ENCODE measurements at regions of chr4 and their contacts with region 1.

Region 1: GRCh38 chr4:82798168-82799005 is at the start of gene SCD5:
- H3K4me3 ChIP-seq: peak within 1 kb of the TSS; percentile 66
- H3K27ac ChIP-seq: peak within 1 kb of the TSS; percentile 66; the same call in 1 of the 2 replicates
- H3K4me1 ChIP-seq: peaks cover 3% of the 10 kb centered on the region
- CTCF ChIP-seq: peak; percentile 26; the same call in 1 of the 2 replicates

Region 2: DNA sequence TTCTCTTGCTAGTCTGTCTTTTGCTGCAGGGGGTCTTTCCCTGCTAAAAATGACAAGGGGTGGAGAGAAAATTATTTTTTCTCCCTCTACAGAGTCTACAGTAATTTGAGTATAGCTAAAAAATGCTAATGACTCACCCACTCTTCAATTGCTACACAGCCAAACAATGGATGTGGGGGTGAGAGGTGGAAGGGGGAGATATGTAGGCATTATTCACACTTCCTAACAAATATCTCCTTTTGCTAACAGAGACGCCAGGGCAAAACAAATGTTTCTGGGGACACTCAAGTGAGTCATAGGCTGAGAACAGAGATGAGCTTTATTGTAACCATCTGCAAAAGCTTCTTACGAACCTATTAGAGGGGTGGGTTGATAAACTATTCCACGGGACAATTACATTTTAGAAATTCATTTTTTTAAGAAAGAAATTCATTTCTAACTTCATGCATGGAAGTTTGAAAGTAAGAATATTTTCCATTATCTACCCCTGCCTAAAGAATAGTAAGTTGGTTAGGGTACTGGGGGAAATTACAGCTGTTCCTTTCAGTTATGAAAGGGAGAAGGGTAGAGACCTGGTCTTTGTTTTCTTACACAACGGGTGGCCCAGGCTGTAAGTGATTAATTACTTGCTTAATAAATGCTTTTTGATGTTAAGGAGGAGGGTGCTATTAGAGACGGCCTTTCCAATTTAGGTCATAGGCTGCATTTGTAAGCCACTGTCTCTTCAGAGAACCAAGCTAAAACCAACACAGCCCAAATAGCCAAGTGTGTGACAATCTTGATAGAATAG is 12.6 kb before region 1 on chr4:
- CTCF ChIA-PET with region 1: interaction called, 3 read pairs
- POLR2A ChIA-PET with region 1: interaction called, 14 read pairs
- H3K4me3 ChIP-seq: no peak overlapping the region; the same call in 1 of the 2 replicates
- H3K27ac ChIP-seq: no peak overlapping the region
- H3K4me1 ChIP-seq: peaks cover 18% of the 10 kb centered on the region
- CTCF ChIP-seq: no peak